ENCODE measurements at regions of chr12 and their contacts with region 1.

Region 1: GRCh38 chr12:546921-547845 is 87.4 kb downstream of the B4GALNT3 start:
- DNase-seq: peak; percentile 71 to 90 (median 74)
- ATAC-seq: peak; percentile 94
- H3K4me3 ChIP-seq: no peak overlapping the region
- H3K4me1 ChIP-seq: no peaks in the 10 kb centered on the region
- CTCF ChIP-seq: peak; percentile 88

Region 2: DNA sequence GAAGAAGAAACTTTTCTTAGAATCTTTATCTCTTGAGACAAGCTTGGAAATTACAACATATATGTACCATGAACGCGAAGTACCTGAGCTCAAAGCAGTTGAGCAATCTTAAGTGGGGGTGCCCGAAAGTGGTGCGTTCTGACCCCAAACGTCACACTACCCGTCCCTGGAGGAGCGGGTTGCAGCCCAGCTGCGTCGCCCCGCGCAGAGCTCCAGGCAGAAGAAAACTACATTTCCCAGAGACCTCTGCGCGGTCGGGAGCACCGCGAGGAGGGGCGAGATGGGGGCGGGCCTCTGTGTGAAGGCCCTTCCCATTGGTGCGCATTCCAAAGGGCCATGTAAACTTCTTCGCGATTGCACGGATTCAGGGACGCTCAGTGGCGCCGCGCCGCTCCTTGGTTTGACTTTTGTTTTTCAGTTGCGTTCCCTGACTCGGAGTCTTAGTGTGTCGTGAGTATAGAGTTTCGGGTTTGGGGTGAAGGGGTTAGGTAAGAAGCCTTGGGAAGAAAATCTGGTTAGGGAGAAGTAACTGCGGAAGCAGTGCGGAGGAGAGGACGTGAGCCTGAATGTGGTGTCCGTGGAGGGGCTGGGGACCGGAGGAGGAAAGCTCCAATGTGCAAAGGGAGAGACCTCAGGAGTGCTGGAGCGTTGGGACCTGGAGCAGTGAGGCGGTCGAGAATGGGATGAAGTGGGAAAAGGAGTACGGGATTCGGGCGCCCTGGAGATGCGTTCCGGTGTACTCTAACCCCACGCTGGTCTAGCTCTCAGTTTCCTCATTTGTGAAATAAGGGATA is 145.8 kb before region 1 on chr12 and contains the start of gene CCDC77:
- intact Hi-C with region 1: no loop called
- DNase-seq: peak; percentile 91 to 95 (median 93)
- ATAC-seq: peak; percentile 100
- H3K4me3 ChIP-seq: peak within 1 kb of the TSS; percentile 20
- H3K4me1 ChIP-seq: peaks cover 6% of the 10 kb centered on the region
- CTCF ChIP-seq: peak; percentile 15
- total RNA-seq, gene CCDC77: 8.2 to 8.5 (median 8.4) TPM

Region 3: GRCh38 chr12:442235-442884 is 104.8 kb before region 1 on chr12:
- intact Hi-C with region 1: loop called in 1 of 2 experiments (anchors 5 kb)
- DNase-seq: peak in 1 of 3 donors; percentile 80
- ATAC-seq: peak; percentile 65
- H3K4me3 ChIP-seq: no peak overlapping the region
- H3K4me1 ChIP-seq: no peaks in the 10 kb centered on the region
- CTCF ChIP-seq: peak; percentile 50

Region 4: DNA sequence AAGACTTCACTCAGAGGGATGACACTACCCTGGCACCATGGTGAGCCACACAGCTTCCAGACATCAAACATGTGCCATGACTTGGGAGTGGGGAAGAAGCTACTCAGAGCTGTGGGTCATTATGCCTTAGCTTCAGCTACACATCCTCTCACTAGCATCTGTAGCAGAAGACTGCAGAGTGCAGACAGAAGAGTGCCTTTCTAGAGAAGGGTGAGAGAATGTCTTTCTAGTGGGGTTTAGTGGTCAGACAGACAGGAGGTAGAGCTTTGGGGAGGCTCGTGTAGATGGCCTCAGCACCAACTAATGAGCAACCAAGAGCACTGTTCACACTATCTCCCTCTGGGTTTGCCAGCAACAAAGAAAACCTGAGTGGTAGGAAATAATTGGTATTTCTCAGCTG is 92.3 kb before region 1 on chr12:
- intact Hi-C with region 1: loop called in 1 of 2 experiments (anchors 2 kb)
- DNase-seq: no peak
- ATAC-seq: no peak
- H3K4me3 ChIP-seq: no peak overlapping the region
- H3K4me1 ChIP-seq: peaks cover 15% of the 10 kb centered on the region
- CTCF ChIP-seq: no peak